HepG2 (cell line): ENCODE measurements at regions of chr15 and their contacts with region 1.

Region 1: DNA sequence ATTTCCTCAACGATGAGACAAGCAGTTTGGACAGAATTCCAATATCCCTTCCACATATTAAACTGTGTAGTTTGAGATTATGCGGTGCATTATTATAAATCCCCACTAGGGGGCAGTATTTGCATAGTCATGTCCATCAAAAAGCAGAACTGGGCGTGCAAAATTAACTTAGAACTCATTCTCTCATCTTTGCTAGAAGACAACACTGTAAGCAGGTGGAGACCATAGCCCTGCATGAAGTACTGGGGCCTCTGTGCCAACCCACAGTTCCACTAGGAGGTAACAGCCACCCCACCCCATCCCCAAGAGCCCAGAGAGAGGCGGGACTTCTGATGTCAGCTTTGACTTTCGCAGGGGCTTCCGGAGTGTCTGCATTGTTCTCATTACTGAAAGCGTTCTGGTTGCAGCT is 106.6 kb upstream of the TMC3 start:
- DNase-seq: peak; percentile 31
- ATAC-seq: peak; percentile 48; the same call in 2 of the 3 replicates
- H3K4me3 ChIP-seq: no peak overlapping the region
- H3K27ac ChIP-seq: no peak overlapping the region
- H3K4me1 ChIP-seq: no peaks in the 10 kb centered on the region
- H3K27me3 ChIP-seq: peaks cover 0 to 4% of the 10 kb centered on the region in 2 experiments; a peak in 1 of 5 replicates
- CTCF ChIP-seq: peak; percentile 71
- EP300 ChIP-seq: no peak
- POLR2A ChIP-seq: no peak
- RAD21 ChIP-seq: peak; percentile 54

Region 2: DNA sequence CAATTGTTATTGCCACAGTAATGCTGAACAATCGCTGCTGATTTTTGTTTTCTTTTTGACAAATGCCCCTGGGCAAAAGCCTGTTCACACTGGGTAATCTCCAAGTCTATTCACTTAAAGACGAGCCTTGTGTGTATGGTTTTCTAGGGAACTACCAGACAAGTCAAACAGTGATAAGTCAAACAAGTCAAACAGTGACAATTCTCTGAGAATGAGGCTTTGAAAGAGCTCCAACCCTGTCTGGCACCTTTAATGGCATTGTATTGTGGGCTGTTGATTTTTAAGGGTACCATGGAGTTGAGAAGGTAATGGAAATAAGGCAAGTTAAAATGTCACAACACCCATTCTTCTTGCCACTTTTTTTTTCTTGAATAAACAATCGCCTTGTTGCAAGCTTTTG is 47.2 kb before region 1 on chr15:
- CTCF ChIA-PET with region 1: no interaction called
- POLR2A ChIA-PET with region 1: no interaction called
- in situ Hi-C with region 1: no loop called
- intact Hi-C with region 1: no loop called
- DNase-seq: no peak
- ATAC-seq: no peak
- H3K4me3 ChIP-seq: no peak overlapping the region
- H3K27ac ChIP-seq: no peak overlapping the region
- H3K4me1 ChIP-seq: no peaks in the 10 kb centered on the region
- H3K27me3 ChIP-seq: no peaks in the 10 kb centered on the region; a peak in 1 of 5 replicates
- CTCF ChIP-seq: no peak
- EP300 ChIP-seq: no peak
- POLR2A ChIP-seq: no peak
- RAD21 ChIP-seq: no peak

Region 3: GRCh38 chr15:81939604-81940440 is 459.2 kb after region 1 on chr15:
- CTCF ChIA-PET with region 1: interaction called, 9 read pairs
- POLR2A ChIA-PET with region 1: no interaction called
- in situ Hi-C with region 1: loop called (anchors 10 kb)
- intact Hi-C with region 1: loop called (anchors 1 kb)
- DNase-seq: peak; percentile 19
- ATAC-seq: no peak
- H3K4me3 ChIP-seq: no peak overlapping the region
- H3K27ac ChIP-seq: no peak overlapping the region
- H3K4me1 ChIP-seq: no peaks in the 10 kb centered on the region
- H3K27me3 ChIP-seq: no peaks in the 10 kb centered on the region
- CTCF ChIP-seq: peak; percentile 65
- EP300 ChIP-seq: no peak
- POLR2A ChIP-seq: no peak
- RAD21 ChIP-seq: no peak; the same call in 1 of the 2 replicates

Region 4: DNA sequence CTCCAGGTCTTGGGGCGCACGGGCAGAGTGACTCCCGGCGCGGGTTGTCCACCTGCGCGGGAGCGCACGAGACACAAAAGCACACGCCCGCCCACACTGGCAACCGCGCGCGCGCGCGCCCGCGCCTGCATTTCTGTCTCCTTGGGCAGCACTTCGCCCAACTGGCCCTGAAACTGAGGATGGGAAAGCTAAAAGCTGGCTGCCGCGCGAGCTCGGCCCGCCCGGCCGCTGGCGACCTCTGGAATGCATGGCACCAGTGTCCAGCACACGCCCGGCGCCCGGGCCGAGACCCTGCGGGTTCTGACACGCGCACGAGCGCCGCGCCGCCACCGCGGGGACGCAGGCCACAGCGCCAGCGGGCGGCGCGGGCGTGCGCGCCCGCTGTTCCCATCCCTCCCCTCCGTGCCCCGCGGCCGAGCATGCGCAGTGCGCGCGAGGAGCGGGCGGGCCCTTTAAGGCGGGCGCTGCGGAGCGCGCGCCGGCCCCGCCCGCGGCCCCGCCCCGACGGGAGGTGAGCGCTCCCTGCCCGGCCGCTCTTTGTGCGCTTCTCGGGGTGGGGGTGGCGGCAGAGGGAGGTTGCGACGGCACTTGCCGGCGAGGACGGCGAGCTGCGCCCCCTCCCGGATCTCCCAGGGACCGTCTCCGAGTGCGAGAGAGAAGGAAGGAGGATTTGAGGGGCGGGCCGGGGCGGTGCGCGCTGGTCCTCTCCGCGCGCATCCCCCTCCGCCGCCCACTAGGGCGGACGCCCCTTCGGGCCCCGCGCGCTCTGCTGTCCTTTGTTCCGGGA is 566.2 kb after region 1 on chr15:
- CTCF ChIA-PET with region 1: no interaction called
- POLR2A ChIA-PET with region 1: no interaction called
- in situ Hi-C with region 1: no loop called
- intact Hi-C with region 1: loop called (anchors 1 kb)
- DNase-seq: peak; percentile 73
- ATAC-seq: peak; percentile 79
- H3K4me3 ChIP-seq: peak overlapping the region; percentile 67 to 80 (median 80)
- H3K27ac ChIP-seq: peak overlapping the region; percentile 29
- H3K4me1 ChIP-seq: peaks cover 8% of the 10 kb centered on the region; the same call in 1 of the 2 replicates
- H3K27me3 ChIP-seq: peaks cover 2 to 32% of the 10 kb centered on the region in 2 experiments; a peak in 4 of 5 replicates
- CTCF ChIP-seq: peak; percentile 69
- EP300 ChIP-seq: no peak
- POLR2A ChIP-seq: 0 out of 4 replicates have a peak, but pooled peaks of 1 of the 2 experiments have one; percentile 42
- RAD21 ChIP-seq: peak; percentile 62

Region 5: DNA sequence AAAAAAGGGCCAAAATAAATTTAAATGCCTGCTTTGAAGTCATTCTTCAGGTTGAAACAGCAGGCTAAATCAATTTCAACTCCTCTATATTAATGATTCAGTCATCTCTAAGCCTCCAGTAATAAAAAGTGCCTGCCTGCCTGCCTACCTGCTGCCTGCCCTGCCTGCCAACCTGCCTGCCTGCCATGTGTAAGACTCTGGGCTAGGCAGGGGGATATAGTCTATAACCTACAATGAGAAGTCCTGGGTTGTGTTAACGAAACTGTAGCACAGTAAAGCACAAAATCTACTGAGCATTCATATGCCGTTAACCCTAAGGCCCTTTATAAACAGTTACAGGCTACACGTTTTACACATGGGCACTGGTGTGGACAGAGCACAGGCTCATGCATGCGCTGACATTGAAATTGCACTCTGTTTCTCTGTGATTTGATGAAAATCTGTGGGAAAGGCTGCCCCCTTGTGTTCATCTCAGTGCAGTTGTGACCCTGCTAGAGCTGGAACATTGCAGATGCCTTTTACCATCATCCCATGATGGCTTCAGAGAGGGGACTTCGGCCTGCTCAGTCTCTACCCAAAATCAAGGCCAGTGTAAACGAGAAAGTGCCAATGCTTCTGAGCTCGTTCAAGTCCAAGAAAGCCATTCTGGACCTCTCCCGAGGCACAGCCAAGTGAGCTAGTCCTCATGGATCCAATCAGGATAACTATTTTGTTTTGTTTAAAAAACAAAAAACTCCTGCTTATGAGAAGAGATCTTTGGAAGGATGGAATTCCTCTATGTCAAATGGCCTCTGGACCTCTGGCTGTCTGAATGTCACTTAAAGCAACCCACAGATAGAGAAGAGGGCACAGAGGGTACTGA is 717.3 kb after region 1 on chr15:
- CTCF ChIA-PET with region 1: no interaction called
- POLR2A ChIA-PET with region 1: no interaction called
- in situ Hi-C with region 1: no loop called
- intact Hi-C with region 1: loop called (anchors 1 kb)
- DNase-seq: peak; percentile 56
- ATAC-seq: peak; percentile 97
- H3K4me3 ChIP-seq: no peak overlapping the region
- H3K27ac ChIP-seq: no peak overlapping the region
- H3K4me1 ChIP-seq: no peaks in the 10 kb centered on the region
- H3K27me3 ChIP-seq: no peaks in the 10 kb centered on the region
- CTCF ChIP-seq: peak; percentile 85
- EP300 ChIP-seq: no peak
- POLR2A ChIP-seq: no peak
- RAD21 ChIP-seq: peak; percentile 36